Activated naive CD8-positive, alpha-beta T cell treated with anti-CD3 and anti-CD28 coated beads, Interleukin-2, amount 10 ng/mL, durations not matched to agents 7 days and 5 days (primary cell): ENCODE measurements at regions of chr2 and their contacts with region 1.

Region 1: GRCh38 chr2:85390941-85391669 is 19.1 kb downstream of the CAPG start:
- DNase-seq: peak; percentile 84
- ATAC-seq: peak; percentile 68
- H3K4me3 Mint-ChIP-seq: no peak overlapping the region
- H3K27ac Mint-ChIP-seq: peak overlapping the region; percentile 38
- H3K4me1 Mint-ChIP-seq: peaks cover 8% of the 10 kb centered on the region
- H3K27me3 Mint-ChIP-seq: no peaks in the 10 kb centered on the region

Region 2: GRCh38 chr2:85485815-85486214 is 94.7 kb after region 1 on chr2:
- POLR2A ChIA-PET with region 1: no interaction called
- DNase-seq: no peak
- ATAC-seq: no peak
- H3K4me3 Mint-ChIP-seq: no peak overlapping the region
- H3K27ac Mint-ChIP-seq: no peak overlapping the region
- H3K4me1 Mint-ChIP-seq: no peaks in the 10 kb centered on the region
- H3K27me3 Mint-ChIP-seq: peaks cover 2% of the 10 kb centered on the region

Region 3: DNA sequence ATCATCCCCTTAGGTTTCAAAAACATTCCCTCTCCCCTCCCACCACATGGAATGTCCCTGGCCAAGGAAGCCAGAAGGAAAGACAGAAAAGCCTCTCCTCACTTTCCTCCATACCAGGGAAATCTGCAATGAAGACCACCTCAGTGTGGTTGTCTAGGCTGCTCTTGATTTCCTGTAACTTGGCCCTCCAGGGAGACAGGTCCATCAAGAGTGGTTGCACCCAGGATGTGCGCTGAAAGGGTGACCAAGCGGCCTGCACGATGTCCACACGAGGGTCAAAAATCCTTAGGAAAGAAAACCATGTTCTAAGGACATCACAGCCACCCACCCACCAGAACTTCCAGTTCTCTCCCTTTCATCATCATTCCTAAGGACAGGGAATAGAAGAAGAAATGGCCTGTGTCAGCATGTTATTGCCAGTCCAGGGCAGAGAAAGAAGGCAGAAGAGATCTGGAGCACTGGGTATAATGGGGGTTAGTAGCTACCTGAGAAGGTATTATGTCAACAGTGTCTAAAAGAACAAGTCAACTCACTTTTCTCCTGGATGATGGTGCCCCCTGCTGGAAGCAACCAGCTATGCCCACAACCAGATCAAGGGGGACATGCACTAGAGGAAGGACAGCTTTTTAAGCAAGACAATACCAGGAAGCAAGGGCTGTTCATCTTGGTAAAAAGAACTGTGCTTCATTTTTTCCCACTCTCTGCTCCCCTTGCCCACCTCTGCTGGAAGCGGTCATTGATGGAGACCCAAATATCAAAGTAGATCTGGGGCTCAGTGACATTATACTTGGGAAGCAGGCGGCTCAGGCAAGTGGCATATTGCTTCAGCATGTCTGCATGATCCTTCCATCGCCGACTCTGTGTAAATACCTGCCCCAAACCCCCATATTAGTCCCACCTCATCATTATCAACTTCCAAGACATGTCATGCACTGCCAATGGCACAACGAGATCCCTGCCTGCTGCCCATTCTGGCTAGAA is 160.9 kb after region 1 on chr2:
- POLR2A ChIA-PET with region 1: interaction called, 14 read pairs
- DNase-seq: peak; percentile 81
- ATAC-seq: peak; percentile 90
- H3K4me3 Mint-ChIP-seq: no peak overlapping the region
- H3K27ac Mint-ChIP-seq: peak overlapping the region; percentile 56
- H3K4me1 Mint-ChIP-seq: peaks cover 8% of the 10 kb centered on the region
- H3K27me3 Mint-ChIP-seq: no peaks in the 10 kb centered on the region